Posterior cingulate gyrus (tissue), 11 donors: ENCODE measurements at regions of chr17 and their contacts with region 1.

Region 1: DNA sequence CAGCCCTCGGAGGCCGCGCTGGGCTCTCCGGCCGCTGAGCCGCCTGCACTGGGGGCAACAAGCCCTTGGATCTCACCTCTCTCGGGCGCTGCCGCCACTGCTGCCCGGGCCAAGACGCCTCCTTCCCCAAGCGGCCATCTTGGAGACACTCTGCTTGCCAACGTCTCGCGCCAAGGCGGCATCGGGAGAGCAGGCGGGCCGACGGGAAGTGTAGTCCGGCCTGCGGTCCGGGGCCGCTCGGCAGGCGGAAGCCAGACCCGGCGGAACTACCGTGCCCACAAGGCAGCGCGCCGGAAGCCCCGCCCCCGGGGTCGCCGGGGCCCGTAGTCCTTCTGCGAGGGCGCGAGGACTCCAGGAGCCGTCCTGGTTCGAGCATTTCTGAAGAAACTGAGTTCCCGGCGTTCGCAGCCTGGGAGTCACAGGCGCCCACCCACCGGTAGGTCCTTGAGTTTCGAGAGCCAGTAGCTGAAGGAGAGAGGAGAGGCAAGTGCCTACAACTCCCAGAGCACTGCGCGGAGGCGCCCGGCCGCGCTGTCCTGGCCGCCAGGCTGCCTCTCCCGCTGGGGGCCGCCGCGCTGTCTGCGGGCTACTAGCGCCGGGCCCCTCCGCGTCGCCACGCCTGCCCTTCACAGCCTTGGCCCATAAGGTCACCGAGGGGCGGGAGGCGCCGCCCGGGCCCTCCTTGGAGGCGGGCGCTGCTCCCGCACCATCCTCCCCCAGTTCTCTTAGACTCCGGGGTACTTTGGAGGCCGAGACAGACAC is at the start of gene TMEM11:
- DNase-seq: peak; percentile 89 to 100 (median 97)

Region 2: GRCh38 chr17:20926532-20926931 is 287.7 kb before region 1 on chr17:
- intact Hi-C with region 1: no loop called
- DNase-seq: no peak

Region 3: DNA sequence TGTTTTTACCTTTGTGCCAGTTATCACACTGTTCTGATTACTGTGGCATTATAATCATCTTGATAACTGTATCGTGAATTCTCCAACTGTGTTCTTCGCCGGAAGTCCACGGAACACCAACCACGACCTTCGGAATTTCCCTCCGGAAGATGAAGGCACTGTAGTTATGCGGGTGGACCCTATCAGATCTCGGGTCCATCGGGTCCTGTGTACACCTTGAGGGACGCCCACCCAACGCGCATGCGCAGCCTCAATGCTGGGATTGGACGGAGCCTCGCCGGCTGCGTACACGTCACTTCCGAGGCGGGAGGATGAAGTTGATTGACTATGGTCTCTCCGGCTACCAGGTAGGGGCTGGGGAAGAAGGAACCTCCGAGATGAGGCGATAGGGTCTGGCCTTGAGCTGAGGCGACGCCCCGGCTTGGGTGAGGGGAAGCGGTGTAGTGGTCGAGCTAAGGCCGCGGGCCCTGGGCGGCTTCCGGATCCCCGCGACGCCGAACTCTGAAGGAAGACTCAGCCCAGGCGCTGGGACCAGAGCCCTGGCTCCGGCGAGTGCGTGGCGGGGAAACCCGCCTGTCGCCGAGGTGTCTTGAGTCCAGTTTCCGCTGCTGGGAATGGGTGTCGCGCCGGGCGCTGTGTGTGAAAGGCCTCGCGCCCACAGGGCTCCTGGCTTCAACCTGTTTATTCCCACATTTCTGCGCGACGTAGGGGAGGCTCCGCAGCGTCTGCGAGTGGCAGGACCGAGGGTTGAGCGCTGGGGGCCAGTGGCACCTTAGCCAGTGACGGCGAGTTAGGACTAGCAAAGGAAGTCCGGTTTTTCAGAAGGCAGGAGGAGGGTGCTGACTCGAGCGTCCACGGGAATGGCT is 87.3 kb before region 1 on chr17 and contains the start of gene DHRS7B:
- intact Hi-C with region 1: loop called (anchors 5 kb)
- DNase-seq: peak; percentile 93 to 99 (median 96)

Region 4: DNA sequence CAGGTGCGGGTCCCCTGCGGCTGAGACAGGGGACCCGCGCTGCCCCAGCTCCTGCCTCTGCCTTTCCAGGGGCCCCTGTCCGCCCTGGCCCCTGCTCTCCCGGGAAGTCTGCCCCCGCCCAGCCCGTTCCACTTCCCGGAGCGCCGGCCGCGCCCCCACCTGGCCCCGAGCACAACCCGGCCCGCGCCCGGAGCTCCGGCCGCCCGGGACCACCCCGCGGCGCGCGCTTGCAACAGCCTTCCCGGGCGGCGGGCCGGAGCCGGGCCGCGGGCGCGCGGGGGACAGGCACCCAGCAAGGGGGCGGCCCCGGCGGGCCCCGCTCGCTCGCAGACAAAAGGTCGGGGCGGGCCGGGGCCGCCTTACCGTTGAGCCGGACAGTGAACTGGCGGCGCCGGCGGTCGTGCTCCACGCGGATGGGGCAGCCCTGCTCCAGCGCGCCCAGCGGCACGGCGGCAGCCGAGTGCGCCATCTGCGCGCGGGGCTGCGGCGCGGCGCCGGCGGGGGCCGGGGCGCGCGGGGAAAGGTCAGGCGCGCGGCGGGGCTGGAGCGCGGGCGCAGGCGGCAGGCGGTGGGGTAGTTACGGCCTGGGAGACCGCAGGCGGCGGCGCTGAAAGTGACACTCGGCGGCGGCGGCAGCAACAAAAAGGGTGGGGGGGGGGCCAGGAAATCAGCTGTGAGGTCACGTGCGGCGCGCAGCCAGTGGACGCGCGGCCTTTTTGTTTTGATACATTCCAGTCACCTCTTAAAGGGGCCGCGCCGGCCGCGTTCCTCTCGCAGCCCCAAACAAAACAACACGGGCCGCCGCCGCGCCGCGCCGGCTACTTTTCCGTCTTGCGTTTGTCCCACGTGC is 38.8 kb after region 1 on chr17 and contains the start of gene NATD1:
- intact Hi-C with region 1: loop called (anchors 1 kb)
- DNase-seq: peak; percentile 70 to 97 (median 86)